ENCODE measurements at regions of chr10 and their contacts with region 1.

Region 1: GRCh38 chr10:132571650-132572535 is 34.3 kb downstream of the INPP5A start:
- DNase-seq: peak; percentile 80
- H3K4me3 Mint-ChIP-seq: no peak overlapping the region
- H3K27ac Mint-ChIP-seq: no peak overlapping the region
- H3K4me1 Mint-ChIP-seq: peaks cover 18% of the 10 kb centered on the region
- H3K27me3 Mint-ChIP-seq: no peaks in the 10 kb centered on the region
- CTCF ChIP-seq: no peak

Region 2: GRCh38 chr10:132458593-132459300 is 113.1 kb before region 1 on chr10:
- CTCF ChIA-PET with region 1: interaction called, 3 read pairs
- intact Hi-C with region 1: loop called (anchors 10 kb)
- DNase-seq: peak; percentile 65
- H3K4me3 Mint-ChIP-seq: no peak overlapping the region
- H3K27ac Mint-ChIP-seq: no peak overlapping the region
- H3K4me1 Mint-ChIP-seq: no peaks in the 10 kb centered on the region
- H3K27me3 Mint-ChIP-seq: no peaks in the 10 kb centered on the region
- CTCF ChIP-seq: peak; percentile 91

Region 3: GRCh38 chr10:132532783-132533560 is 38.9 kb before region 1 on chr10:
- CTCF ChIA-PET with region 1: interaction called, 3 read pairs
- intact Hi-C with region 1: loop called (anchors 2 kb)
- DNase-seq: peak; percentile 66
- H3K4me3 Mint-ChIP-seq: peak overlapping the region; percentile 41
- H3K27ac Mint-ChIP-seq: peak overlapping the region; percentile 34
- H3K4me1 Mint-ChIP-seq: peaks cover 27% of the 10 kb centered on the region
- H3K27me3 Mint-ChIP-seq: no peaks in the 10 kb centered on the region
- CTCF ChIP-seq: no peak

Region 4: DNA sequence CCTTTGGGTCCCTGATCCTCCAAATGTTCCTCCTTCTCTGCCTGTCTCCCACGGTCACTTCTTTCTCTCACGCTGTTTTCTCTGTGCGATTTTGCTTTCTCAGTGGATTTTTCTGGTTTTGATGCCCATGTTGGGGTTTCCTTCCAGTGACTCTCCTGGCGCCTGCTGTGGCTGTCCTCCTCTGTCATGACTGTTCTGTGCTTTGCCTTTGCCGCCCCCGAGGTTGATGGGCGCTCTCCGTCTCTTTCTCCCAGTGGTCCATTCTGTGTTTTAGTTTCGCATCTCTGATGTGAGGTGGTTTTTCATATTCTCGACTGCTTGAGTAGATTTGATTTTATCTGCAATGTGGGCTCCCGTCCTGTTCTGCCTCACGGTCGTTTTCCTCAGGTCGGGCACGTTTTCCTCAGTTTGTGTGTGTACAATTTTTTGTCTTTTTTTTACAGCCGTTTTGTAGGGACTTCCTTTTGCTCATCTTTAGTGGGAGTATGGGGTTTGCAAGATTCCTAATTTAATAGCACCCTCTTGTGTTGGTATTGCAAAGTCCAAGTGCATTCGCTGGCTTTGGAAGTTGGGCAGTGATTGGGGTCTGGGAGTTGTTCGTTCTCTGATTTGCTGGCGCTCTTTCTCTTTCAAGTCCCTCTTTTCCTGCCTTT is 65.7 kb after region 1 on chr10:
- CTCF ChIA-PET with region 1: no interaction called
- intact Hi-C with region 1: loop called (anchors 5 kb)
- DNase-seq: peak; percentile 22
- H3K4me3 Mint-ChIP-seq: no peak overlapping the region
- H3K27ac Mint-ChIP-seq: no peak overlapping the region
- H3K4me1 Mint-ChIP-seq: peaks cover 14% of the 10 kb centered on the region
- H3K27me3 Mint-ChIP-seq: no peaks in the 10 kb centered on the region
- CTCF ChIP-seq: peak; percentile 17

Measured in Calu3 (cell line).